Cardiac septum (tissue), 1 donor: ENCODE measurements at regions of chr14 and their contacts with region 1.

Region 1: GRCh38 chr14:92121670-92122350 is at the starts of genes CPSF2 and NDUFB1:
- DNase-seq: peak; percentile 95
- total RNA-seq, gene CPSF2: 41.1 TPM
- total RNA-seq, gene NDUFB1: 410 TPM

Region 2: DNA sequence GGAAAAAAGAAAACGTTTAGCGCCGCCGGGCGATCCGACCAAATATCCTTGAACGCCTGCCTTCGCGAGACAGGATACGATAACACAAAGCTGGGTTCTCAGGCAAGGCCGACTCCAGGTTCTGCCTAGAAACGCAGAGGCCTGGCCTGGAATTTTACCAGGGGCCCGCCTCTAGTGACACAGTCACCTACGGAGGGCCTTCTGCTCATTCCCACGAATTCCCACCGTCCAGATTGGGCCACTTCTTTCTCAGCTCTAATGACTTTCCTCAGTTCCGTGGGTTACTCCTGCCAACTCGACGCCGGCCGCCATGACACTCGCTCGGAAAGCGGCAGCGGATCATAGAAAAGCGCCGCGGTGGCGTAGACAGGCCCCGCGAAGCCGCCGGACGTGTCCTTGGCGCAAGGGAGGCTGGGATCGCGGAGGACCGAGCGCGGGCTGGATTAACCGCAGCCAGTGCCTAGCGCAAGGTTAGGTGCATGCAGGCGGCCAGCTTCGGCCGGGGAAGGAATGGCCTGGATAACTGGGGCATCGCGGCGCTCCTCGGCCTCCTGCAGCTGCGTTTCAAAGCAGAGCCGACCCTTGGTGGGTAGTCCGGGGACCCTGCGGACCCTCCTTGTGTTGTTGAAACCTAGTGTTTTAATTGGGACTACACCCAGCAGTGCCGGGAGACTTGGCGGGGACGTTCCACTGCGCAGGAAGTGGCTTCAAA is 81.9 kb before region 1 on chr14 and contains the start of gene TRIP11:
- intact Hi-C with region 1: loop called (anchors 5 kb)
- DNase-seq: peak; percentile 97
- total RNA-seq, gene TRIP11: 68.0 TPM

Region 3: DNA sequence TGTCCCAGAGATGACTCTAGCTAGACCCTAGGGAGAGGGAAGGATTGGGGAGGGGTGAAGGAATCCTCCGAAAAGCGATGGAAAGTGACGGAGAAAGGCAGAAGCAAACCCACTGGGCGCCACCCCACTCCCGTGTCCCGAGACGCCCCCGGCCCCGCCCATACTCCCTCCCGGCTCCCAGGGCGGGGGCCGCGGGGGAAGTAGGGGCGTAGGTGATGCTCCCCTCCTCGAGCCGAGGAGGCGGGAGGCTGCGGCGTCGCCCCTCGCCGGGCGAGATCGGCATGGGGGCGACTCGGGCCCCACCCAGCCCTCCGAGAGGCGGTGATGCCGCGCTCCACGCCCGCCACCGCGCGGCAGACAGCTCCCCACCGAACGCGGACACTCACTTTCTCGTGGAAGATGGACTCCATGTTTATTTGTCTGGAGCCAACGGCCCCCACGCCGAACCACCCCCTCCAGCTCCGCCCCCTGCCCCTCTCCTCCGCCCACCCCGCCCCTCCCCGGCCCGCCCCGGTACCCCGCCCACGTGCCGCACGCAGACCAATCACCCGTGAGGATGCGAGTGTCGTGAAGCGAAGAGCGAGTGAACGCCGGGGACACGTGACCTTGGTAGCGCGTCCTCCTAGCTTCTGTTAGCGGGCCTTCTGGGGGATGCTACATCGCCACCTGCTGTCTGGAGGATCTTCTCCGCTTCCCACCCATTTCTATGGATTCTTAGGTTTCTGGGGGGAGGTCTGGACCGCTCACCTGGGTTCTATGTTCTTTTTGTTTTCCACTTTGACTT is 15.5 kb before region 1 on chr14 and contains the start of gene ATXN3:
- intact Hi-C with region 1: loop called (anchors 2 kb)
- DNase-seq: peak; percentile 99
- total RNA-seq, gene ATXN3: 17.6 TPM

Region 4: GRCh38 chr14:92456215-92457015 is 334.6 kb after region 1 on chr14:
- intact Hi-C with region 1: loop called (anchors 5 kb)
- DNase-seq: no peak

Region 5: GRCh38 chr14:92680781-92681650 is 559.2 kb after region 1 on chr14:
- intact Hi-C with region 1: loop called (anchors 5 kb)
- DNase-seq: peak; percentile 90